Tibial artery (tissue), 4 donors: ENCODE measurements at regions of chr19 and their contacts with region 1.

Region 1: GRCh38 chr19:33373701-33374421 is at the start of gene CEBPG:
- DNase-seq: peak in 1 of 2 donors; percentile 80
- H3K4me3 ChIP-seq: peak within 1 kb of the TSS; percentile 76 to 83
- H3K27ac ChIP-seq: peak within 1 kb of the TSS; percentile 92 to 95
- H3K4me1 ChIP-seq: peaks cover 0 to 37% (median 16%) of the 10 kb centered on the region in 4 donors
- H3K27me3 ChIP-seq: no peaks in the 10 kb centered on the region
- CTCF ChIP-seq: peak in 1 of 2 experiments; percentile 48

Region 2: DNA sequence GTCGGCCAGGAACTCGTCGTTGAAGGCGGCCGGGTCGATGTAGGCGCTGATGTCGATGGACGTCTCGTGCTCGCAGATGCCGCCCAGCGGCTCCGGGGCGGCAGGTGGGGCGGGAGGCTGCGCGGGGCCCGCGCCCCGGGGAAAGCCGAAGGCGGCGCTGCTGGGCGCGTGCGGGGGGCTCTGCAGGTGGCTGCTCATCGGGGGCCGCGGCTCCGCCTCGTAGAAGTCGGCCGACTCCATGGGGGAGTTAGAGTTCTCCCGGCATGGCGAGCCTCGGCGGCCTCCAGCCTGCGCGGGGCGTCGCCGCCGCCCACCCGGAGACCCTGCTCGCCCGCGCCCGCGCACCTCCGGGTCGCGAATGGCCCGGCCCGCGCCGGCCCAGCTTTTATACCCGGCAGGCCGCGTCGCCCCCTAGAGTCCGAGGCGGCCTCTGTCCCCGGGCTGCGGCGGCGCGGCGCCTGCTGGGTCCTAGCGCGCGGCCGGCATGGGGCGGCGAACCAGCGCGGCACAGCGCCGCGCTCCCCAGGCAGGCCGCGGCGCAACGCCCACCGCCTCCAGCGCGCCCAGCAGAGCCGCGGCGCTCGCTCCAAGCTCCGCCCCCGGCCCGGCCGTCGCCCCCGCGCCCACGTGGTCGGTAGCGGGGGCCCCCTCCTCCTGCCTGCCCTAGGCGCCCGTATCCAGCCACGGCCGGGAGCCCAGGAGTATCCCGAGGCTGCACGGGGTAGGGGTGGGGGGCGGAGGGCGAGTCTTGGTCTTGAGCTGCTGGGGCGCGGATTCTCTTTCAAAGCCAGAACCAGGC is 71.5 kb before region 1 on chr19 and contains the start of gene CEBPA:
- intact Hi-C with region 1: loop called (anchors 2 kb)
- DNase-seq: peak; percentile 61 to 81
- H3K4me3 ChIP-seq: peak within 1 kb of the TSS; percentile 60 to 68
- H3K27ac ChIP-seq: peak within 1 kb of the TSS; percentile 54 to 68
- H3K4me1 ChIP-seq: peaks cover 0 to 53% (median 38%) of the 10 kb centered on the region in 4 donors
- H3K27me3 ChIP-seq: peaks cover 0 to 40% of the 10 kb centered on the region in 2 donors
- CTCF ChIP-seq: peak; percentile 10 to 62